Mammary epithelial cell (primary cell): ENCODE measurements at regions of chr21 and their contacts with region 1.

Region 1: DNA sequence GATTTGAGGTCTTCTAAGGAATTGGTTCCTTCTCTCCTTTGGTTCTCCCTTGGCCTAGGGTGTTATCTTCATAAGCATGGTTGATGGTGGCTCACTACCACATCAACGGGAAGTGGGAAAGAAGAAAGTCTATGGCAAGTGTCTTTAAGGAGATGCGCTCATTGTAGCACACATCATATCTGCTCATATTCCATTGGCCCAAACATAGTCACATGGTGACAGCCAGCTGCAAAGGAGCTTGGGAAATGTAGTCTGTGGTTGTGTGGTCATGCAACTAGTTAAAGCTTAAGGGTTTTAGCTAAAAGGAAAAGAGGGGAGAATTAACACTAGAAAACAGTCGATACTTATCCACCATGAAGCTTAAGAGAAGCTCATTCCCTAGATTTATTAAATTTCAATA is 11.4 kb upstream of the MRPS6 start:
- DNase-seq: no peak
- H3K4me3 ChIP-seq: no peak overlapping the region
- H3K27ac ChIP-seq: no peak overlapping the region
- H3K4me1 ChIP-seq: no peaks in the 10 kb centered on the region
- H3K27me3 ChIP-seq: no peaks in the 10 kb centered on the region
- CTCF ChIP-seq: no peak

Region 2: DNA sequence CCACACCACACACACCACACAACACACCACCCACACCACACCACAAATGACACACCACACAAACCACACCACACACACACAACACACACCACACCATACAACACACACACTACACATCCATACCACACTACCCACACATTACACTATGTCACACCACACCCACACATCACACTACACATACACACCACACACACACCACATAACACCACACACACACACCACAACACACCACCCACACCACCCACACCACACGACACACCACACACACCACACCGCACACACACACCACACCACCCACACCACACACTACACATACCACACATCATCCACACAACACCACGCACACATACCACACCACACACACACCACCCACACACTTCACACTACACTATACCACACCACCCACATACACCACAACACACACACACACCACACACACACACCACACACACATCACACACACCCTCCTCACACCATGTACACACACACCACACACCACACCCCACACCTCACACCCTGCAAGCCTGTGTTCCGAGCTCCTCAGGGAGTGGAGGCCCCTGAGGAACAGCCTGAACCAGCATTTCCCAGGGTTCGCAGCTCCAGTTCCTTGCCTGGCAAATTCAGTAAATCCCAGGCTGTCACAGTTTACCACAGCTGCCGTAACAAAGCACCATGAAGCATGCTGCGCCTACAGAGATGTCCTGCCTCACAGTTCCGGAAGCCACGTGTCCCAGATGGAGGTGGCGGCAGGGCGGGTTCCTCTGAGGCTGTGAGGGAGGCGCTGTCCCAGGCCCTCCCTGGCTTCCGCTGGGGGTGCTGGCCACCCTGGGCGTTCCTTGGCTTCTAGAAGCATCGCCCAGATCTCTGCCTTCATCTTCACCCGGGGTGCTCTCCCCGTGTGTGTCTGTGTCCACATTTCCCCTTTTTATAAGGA is 76.6 kb before region 1 on chr21:
- CTCF ChIA-PET with region 1: no interaction called
- dilution Hi-C with region 1: loop called (anchors 5 kb)
- in situ Hi-C with region 1: no loop called
- intact Hi-C with region 1: no loop called
- DNase-seq: no peak
- H3K4me3 ChIP-seq: no peak overlapping the region
- H3K27ac ChIP-seq: no peak overlapping the region
- H3K4me1 ChIP-seq: no peaks in the 10 kb centered on the region
- H3K27me3 ChIP-seq: no peaks in the 10 kb centered on the region
- CTCF ChIP-seq: no peak

Region 3: GRCh38 chr21:34004974-34005373 is 57.0 kb before region 1 on chr21:
- CTCF ChIA-PET with region 1: no interaction called
- dilution Hi-C with region 1: no loop called
- in situ Hi-C with region 1: no loop called
- intact Hi-C with region 1: no loop called
- DNase-seq: no peak
- H3K4me3 ChIP-seq: no peak overlapping the region
- H3K27ac ChIP-seq: no peak overlapping the region
- H3K4me1 ChIP-seq: no peaks in the 10 kb centered on the region
- H3K27me3 ChIP-seq: no peaks in the 10 kb centered on the region
- CTCF ChIP-seq: no peak

Region 4: DNA sequence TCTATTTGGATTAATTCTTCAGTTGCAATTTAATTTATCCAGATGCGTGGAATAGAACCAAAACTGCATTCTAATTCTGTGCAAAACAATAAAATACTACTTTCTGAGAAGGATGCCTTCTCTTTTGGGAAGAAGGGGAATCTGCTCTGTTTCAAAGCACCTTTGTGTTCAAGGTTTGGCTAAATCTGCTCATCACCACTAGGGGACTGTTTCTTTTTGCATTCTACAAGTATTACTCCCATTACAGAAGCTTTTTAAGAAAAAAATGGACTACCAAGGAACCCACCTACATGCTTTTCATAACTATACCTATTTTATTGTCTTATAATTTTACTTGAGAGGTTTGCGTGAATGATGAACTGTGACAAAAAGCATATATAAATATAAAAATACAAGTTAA is 29.6 kb after region 1 on chr21:
- CTCF ChIA-PET with region 1: no interaction called
- dilution Hi-C with region 1: no loop called
- in situ Hi-C with region 1: no loop called
- intact Hi-C with region 1: no loop called
- DNase-seq: no peak
- H3K4me3 ChIP-seq: no peak overlapping the region
- H3K27ac ChIP-seq: no peak overlapping the region
- H3K4me1 ChIP-seq: no peaks in the 10 kb centered on the region
- H3K27me3 ChIP-seq: no peaks in the 10 kb centered on the region
- CTCF ChIP-seq: peak; percentile 38 to 47